Activated T-helper 1 cell treated with anti-CD3 and anti-CD28 coated beads, Interleukin-12 subunit alpha, Interleukin-12 subunit beta, Interleukin-2, Interleukin-4 antibody, amounts not matched to agents 30 ng/mL and 10 ng/mL and 1 ng/mL, durations not matched to agents 14 hours and 24 hours and 36 hours (primary cell): ENCODE measurements at regions of chr7 and their contacts with region 1.

Region 1: GRCh38 chr7:92134271-92135051 is at the start of gene CYP51A1:
- DNase-seq: peak; percentile 92
- H3K4me3 Mint-ChIP-seq: peak within 1 kb of the TSS; percentile 98
- H3K27ac Mint-ChIP-seq: peak within 1 kb of the TSS; percentile 97
- H3K4me1 Mint-ChIP-seq: peaks cover 44% of the 10 kb centered on the region
- H3K27me3 Mint-ChIP-seq: no peaks in the 10 kb centered on the region
- total RNA-seq, gene CYP51A1: 96.9 and 102 TPM in 2 replicates

Region 2: DNA sequence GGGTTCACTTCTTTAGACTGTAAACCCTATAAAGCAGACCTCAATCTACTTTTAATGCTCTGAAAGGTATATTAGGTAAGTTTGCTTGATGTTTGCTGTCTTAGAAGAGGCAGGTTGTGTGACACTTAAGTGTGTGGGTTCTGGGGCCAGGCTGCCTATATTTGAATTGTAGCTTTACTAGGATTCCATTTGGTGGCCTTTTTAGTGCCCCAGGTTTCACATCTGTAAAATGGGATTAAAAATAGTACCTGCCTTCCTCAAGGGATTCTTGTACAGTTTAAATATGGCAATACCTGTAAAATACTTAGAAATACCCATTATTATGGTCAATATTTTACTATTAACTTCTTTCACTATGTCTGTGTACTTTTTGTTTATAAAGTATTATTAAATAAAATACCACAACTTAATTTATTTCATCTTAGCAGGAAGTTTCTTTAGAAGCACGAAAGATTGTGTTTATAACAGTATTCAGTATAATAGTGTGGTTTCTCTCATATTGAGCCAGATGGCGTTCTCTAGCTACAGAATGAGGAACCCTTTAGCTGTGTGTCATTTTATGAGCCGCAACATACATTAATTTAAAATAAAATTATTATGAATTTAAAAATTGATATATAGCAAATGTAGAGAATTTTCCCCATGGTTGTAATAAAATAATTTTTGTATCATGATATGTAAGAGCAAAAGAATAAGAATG is 1444.2 kb before region 1 on chr7:
- intact Hi-C with region 1: no loop called
- DNase-seq: no peak
- H3K4me3 Mint-ChIP-seq: no peak overlapping the region
- H3K27ac Mint-ChIP-seq: no peak overlapping the region
- H3K4me1 Mint-ChIP-seq: no peaks in the 10 kb centered on the region
- H3K27me3 Mint-ChIP-seq: peaks cover 4% of the 10 kb centered on the region

Region 3: GRCh38 chr7:91880413-91881241 is 253.8 kb before region 1 on chr7 and contains the start of gene MTERF1:
- intact Hi-C with region 1: loop called (anchors 2 kb)
- DNase-seq: peak; percentile 85
- H3K4me3 Mint-ChIP-seq: peak within 1 kb of the TSS; percentile 99
- H3K27ac Mint-ChIP-seq: peak within 1 kb of the TSS; percentile 98
- H3K4me1 Mint-ChIP-seq: peaks cover 37% of the 10 kb centered on the region
- H3K27me3 Mint-ChIP-seq: peaks cover 2% of the 10 kb centered on the region
- total RNA-seq, gene MTERF1: 19.3 and 20.4 TPM in 2 replicates

Region 4: DNA sequence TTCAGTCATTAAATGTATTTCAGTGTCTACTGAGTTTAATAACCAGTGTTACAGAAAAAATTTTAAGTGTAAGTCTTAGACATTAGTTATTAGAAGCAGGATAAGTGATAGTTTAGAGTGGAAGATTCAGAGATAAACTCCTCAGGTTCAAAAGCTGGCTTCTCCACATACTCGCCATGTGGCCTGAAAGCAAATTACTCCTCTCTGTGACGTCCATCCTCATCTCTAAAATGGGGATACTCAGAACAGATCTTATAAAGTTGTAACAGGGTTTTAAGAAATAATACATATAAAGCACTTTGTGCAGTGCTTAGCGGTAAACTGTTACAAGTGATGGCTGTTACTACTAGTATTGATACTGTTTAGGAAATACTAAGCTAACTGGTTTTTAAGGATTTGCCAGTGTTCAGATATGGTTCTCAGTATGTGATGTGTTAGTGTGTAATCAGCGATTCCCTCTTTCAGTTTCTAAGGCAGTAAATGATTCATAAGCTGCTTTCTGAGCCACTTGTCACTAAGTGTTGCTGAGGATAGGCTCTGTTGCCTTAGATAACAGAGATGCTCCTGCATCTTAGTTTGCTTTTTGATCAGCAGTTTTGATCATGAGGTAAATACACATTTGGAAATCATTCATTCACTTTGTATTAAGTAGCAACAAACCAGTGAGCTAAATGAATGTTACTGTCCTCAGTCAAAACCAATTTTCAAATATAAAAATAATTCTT is 58.9 kb before region 1 on chr7:
- intact Hi-C with region 1: loop called (anchors 2 kb)
- DNase-seq: no peak
- H3K4me3 Mint-ChIP-seq: no peak overlapping the region
- H3K27ac Mint-ChIP-seq: no peak overlapping the region
- H3K4me1 Mint-ChIP-seq: no peaks in the 10 kb centered on the region
- H3K27me3 Mint-ChIP-seq: no peaks in the 10 kb centered on the region

Region 5: DNA sequence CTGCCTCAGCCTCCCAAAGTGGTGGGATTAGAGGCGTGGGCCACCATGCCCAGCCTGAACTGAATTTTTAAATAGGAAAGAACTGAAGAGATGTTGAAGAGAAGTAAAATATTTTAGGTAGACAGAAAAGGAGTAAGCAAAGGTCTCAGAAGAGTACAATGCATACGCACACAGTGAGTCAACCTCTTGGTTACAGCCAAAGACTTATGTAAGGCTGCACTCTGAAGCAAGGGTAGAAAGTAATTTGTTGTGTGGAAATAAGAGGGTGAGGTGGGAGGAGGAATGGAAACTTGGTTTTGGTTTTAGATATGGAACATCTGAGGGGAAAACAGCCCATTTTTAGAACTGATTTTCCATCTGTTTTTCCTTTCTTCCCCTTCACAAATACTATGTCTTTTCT is 93.6 kb after region 1 on chr7:
- intact Hi-C with region 1: loop called (anchors 5 kb)
- DNase-seq: no peak
- H3K4me3 Mint-ChIP-seq: no peak overlapping the region
- H3K27ac Mint-ChIP-seq: peak overlapping the region; percentile 81
- H3K4me1 Mint-ChIP-seq: peaks cover 24% of the 10 kb centered on the region
- H3K27me3 Mint-ChIP-seq: no peaks in the 10 kb centered on the region

Region 6: DNA sequence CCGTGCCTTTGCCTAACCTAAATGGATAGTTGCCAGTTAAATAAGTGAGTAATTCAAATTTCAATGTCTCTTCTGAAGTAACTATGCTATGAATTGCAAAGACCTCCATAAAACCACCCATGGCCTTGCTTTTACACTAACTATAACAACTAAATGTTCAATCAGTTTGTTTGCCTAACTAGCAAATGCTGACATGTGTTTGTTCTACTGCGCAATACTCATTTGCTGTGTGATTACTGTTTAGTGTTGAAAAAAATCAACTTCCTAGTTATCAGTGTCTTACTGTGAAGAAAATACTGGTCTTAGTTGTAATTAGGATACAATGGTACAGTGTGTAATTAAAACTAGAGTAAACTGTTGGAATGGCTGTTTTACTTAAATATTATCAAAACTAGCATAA is 265.6 kb after region 1 on chr7:
- intact Hi-C with region 1: no loop called
- DNase-seq: no peak
- H3K4me3 Mint-ChIP-seq: no peak overlapping the region
- H3K27ac Mint-ChIP-seq: no peak overlapping the region
- H3K4me1 Mint-ChIP-seq: peaks cover 14% of the 10 kb centered on the region
- H3K27me3 Mint-ChIP-seq: no peaks in the 10 kb centered on the region

Region 7: DNA sequence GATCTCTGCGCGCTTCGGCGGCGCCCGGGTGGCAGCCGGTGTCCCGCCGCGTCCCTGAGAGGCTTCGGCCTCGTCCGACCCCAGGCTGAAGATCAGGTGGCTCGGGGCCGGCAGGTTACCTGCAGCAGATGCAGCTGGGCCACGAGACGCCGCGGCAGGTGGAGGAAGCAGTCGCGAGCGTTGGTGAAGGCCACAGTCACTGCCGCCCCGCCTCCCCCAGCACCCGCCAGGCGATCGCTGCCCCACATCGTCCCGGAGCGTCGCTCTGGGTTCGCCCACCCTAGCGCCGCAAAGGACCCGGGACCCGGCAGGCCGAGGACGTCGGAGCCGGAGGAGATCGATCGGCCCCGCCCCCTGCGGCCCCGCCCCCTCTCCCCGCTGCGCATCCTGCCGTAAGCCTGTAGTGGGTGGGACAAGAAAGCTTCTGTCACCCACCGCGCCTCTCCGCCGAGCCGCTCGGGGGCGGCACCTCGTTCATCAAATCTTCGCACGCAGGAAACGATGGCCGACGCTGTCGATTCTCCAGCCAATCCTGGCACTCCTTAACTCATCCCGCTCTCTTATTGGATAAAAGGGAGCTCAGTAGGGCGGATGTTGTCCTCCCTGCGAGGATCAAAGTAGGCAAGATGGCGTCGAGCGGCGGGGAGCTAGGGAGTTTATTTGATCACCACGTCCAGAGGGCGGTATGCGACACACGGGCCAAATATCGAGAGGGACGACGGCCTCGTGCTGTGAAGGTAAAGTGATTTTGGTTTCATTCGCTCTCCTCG is 393.9 kb after region 1 on chr7 and contains the starts of genes PEX1 and RBM48:
- intact Hi-C with region 1: loop called (anchors 1 kb)
- DNase-seq: peak; percentile 94
- H3K4me3 Mint-ChIP-seq: peak within 1 kb of the TSS; percentile 91
- H3K27ac Mint-ChIP-seq: peak within 1 kb of the TSS; percentile 94
- H3K4me1 Mint-ChIP-seq: peaks cover 24% of the 10 kb centered on the region
- H3K27me3 Mint-ChIP-seq: no peaks in the 10 kb centered on the region
- total RNA-seq, gene PEX1: 14.7 and 17.0 TPM in 2 replicates
- total RNA-seq, gene RBM48: 17.2 and 17.6 TPM in 2 replicates

Region 8: DNA sequence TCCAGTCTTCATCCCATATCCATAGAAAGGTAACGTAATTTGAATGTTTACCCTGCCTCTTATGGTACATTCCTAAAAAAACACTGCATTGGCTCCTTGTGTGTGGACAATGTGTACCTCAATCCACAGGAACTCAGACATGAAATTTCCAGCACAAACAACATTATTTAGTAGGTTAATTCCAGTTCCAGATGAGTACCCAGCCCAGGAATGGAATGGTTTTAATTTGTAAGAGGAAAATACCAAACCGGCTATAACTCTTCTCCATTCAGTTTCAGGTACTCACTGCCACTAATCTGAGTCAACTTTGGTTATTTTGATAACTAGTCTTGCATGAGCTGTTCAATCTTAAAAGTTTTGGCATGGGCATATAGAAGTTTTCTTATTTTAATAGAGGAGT is 1717.1 kb after region 1 on chr7:
- intact Hi-C with region 1: no loop called
- DNase-seq: no peak
- H3K4me3 Mint-ChIP-seq: no peak overlapping the region
- H3K27ac Mint-ChIP-seq: no peak overlapping the region
- H3K4me1 Mint-ChIP-seq: no peaks in the 10 kb centered on the region
- H3K27me3 Mint-ChIP-seq: peaks cover 3% of the 10 kb centered on the region

Region 9: DNA sequence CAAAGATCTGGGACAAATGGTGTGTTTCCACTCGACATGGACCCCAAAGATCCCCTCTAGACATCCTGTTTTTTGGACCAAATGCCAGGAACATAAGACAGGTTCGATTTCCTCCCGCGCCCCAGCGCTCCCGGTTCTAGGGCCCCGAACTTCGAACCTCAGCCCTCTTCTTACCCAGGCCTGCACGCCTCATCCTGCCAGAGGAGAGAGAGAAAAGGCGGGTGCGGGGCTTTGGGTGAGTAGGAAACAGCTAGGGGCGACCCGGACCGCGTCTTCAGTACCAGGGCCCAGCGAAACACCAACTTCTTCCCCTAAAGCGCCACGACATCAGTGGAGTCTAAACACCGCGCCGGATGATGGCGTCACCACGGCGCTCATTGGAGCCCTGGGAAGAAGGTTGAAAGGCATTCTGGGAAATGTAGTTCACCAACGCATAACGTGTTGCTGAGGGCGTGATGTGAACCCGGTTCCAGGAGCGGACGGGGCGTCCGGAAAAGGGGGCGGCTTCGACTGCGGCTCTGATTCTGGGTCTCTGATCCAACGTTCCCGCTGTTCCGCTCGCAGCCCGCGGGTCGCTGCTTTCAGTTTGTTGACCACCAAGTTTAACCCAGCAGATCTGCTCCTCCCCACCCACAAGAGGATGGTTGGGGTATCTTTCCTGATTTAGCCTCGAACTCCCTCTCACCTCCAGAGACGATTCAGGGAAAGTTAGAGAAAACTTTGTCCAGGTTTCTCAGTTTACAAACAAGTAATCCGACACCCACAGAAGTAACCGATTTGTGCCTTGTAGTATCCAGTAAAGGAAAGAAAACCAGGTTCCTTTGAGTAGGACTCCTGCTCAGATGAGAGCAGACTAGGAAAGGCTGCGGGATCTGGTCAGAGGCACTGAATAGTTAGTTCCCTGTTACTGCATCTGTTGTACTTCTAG is 1869.8 kb after region 1 on chr7 and contains the start of gene BET1:
- intact Hi-C with region 1: loop called (anchors 10 kb)
- DNase-seq: peak; percentile 88
- H3K4me3 Mint-ChIP-seq: peak within 1 kb of the TSS; percentile 97
- H3K27ac Mint-ChIP-seq: peak within 1 kb of the TSS; percentile 97
- H3K4me1 Mint-ChIP-seq: peaks cover 35% of the 10 kb centered on the region
- H3K27me3 Mint-ChIP-seq: peaks cover 4% of the 10 kb centered on the region
- total RNA-seq, gene BET1: 21.4 and 21.6 TPM in 2 replicates